ENCODE measurements at regions of chr2 and their contacts with region 1.

Region 1: DNA sequence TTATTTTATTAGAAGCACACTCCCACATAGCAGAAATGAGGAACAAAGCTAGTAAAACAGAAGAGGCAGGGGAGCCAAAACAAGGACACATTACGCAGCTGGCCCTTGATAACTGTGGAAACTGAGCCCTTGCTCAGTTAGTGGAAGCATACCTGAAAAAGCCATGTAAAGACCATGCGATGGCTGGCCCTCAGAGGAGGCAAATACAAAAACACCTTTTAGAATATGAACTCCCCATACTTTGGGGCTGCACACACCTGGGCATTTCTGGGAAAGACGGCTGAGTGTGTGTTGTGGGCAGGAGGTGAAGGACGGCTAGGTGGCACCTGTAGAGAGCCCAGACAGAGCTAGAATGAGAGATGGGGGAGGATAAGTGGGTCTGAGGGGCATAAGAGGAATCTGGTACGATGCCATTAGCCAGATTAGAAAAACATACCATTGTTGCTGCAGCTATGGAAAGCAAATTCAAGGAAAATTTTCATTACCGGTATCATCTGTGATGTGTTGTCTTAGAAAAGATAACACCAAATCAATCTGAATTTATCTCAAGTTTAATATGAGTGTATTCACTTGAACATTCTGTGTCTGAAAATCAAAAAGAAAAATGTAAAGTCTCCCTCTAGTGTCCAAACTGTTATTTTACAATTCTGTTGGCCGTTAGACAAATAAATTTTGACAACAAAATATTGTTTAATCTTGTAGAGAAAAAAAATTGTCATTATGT is 45.2 kb upstream of the SULT1C3 start:
- DNase-seq: no peak
- ATAC-seq: no peak
- H3K4me3 ChIP-seq: no peak overlapping the region
- H3K27ac ChIP-seq: no peak overlapping the region
- H3K4me1 ChIP-seq: no peaks in the 10 kb centered on the region
- H3K27me3 ChIP-seq: no peaks in the 10 kb centered on the region
- CTCF ChIP-seq: peak; percentile 21 to 70 (median 42)
- POLR2A ChIP-seq: no peak

Region 2: DNA sequence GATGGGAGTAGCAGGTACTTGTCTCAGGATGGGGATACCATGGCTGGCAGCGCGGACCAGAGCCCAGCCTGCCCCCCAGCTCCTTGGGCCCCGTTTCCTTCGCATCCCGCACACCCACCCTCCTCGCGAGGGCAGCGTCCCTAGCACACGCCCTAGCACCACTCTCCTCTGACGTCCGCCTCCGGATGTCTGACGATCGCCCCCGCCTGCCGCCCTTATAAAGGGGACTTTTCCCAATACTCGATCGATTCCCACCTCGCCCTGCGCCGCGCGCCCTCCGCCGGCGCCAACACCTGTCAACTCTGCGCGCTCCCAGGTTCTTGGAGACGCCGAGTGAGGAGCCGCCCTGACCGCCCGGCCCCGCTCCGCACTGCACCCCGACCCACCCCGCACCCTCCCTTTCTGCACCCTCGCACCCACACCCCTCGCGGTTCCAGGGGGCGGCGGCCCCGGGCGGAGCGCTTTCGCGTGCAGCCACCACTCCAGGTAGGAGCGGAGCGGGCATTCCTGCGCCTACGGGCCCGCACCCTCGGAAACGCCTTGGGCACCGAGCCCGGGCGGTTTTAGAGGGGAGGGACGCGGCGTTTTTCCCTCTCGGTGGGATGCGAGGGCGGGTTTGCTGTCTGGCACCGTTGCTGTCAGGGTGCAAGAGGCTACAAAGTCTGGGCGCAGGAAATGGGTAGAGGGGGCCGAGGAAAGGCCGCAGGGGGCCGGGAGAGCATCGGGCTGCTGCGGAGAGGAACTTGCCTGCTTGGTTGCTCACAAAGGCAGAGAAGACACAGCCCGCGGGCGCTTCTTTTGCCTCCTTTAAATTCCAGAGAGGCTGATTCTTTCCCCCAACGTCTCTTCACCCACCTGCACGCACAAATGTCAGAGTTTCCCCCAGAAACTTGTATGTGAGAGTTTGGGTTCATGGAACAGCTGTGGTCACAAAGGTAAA is 208.0 kb before region 1 on chr2 and contains the start of gene SLC5A7:
- intact Hi-C with region 1: no loop called
- DNase-seq: peak in 1 of 5 donors; percentile 43
- ATAC-seq: peak in 1 of 4 donors; percentile 15
- H3K4me3 ChIP-seq: peak within 1 kb of the TSS in 4 of 12 donors; percentile 15 to 32 (median 20)
- H3K27ac ChIP-seq: no peak within 1 kb of the TSS
- H3K4me1 ChIP-seq: peaks cover 0 to 7% (median 0%) of the 10 kb centered on the region in 12 donors
- H3K27me3 ChIP-seq: peaks cover 7 to 45% (median 26%) of the 10 kb centered on the region in 9 donors
- CTCF ChIP-seq: no peak
- POLR2A ChIP-seq: no peak
- total RNA-seq, gene SLC5A7: 0.05 to 0.16 (median 0.11) TPM in 6 of 9 donors, not detected in the others

Region 3: GRCh38 chr2:108034849-108035248 is 159.7 kb before region 1 on chr2:
- intact Hi-C with region 1: loop called in 1 of 10 experiments (anchors 2 kb)
- DNase-seq: no peak
- ATAC-seq: no peak
- H3K4me3 ChIP-seq: no peak overlapping the region
- H3K27ac ChIP-seq: no peak overlapping the region
- H3K4me1 ChIP-seq: no peaks in the 10 kb centered on the region
- H3K27me3 ChIP-seq: no peaks in the 10 kb centered on the region
- CTCF ChIP-seq: no peak
- POLR2A ChIP-seq: no peak

Measured in heart left ventricle (tissue), 16 donors.